Astrocyte of the cerebellum (primary cell): ENCODE measurements at regions of chr9 and their contacts with region 1.

Region 1: GRCh38 chr9:100058699-100059579 is 39.9 kb downstream of the ERP44 start:
- DNase-seq: no peak
- H3K4me3 ChIP-seq: no peak overlapping the region
- CTCF ChIP-seq: no peak

Region 2: DNA sequence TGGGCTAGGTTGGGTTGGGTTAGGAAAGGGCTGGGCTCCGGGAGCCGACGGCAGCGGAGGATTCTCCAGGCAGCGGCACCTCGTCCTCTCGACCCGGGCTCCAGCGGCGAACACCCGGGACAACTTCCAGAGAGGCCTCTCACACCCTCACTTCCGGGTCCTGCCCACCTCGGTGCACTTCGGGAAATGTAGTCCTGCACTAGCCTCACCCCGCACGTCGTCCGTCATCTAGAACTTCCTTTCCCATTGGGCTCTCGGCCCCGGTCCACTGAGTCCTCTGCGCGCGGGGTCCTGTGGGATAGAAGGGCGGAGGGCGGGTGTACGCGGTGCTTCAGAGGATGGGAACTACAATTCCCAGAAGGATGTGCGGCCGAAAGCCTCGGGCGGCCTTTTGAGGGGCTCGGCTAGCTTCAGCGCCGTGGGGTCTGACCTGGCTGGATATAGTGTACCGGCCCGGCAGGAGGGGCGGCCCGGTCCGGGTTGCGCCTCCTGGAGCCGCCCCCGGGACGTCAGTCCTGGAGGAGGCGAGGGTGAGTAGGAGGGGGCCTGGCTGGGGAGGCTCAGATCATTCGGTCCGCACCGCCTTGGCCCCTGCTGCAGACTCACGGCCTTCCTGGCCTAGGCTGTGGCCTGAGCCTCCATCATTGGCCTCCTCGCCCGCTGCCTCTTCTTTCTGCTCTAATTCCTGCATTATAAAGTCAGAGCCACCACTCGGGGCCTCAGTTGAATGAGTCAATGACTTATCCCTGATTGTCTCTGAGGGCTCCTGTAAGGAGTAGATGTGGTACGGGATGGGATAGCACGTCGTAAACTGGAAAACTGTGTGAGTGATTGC is 40.2 kb after region 1 on chr9 and contains the starts of genes ERP44 and INVS:
- in situ Hi-C with region 1: no loop called
- DNase-seq: peak; percentile 98
- H3K4me3 ChIP-seq: peak within 1 kb of the TSS; percentile 93
- CTCF ChIP-seq: no peak

Region 3: DNA sequence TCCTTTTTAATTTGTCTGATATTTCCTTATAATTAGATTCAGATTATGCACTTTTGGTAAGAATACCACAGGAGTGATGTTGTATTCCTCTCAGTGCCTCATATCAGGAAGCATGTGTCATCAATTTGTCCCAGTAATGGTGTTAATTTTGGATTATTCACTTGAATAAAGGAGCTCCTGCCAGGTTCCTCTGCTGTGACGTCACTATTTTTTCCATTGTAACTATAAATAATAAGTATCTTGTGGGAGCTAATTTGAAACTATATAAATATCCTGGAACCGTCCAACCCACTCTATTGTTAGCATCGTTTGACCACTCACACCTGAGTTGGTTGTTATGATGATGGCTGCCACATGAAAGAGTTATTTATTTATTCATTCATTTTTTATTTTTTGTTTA is 148.0 kb after region 1 on chr9:
- in situ Hi-C with region 1: no loop called
- DNase-seq: peak; percentile 15
- H3K4me3 ChIP-seq: no peak overlapping the region
- CTCF ChIP-seq: no peak

Region 4: GRCh38 chr9:100589582-100589981 is 530.6 kb after region 1 on chr9:
- in situ Hi-C with region 1: loop called (anchors 10 kb)
- DNase-seq: peak; percentile 71
- H3K4me3 ChIP-seq: no peak overlapping the region
- CTCF ChIP-seq: no peak